AG04450 (cell line): ENCODE measurements at regions of chr1 and their contacts with region 1.

Region 1: GRCh38 chr1:151106894-151107293 is 36.3 kb downstream of the GABPB2 start:
- DNase-seq: no peak
- H3K4me3 ChIP-seq: no peak overlapping the region
- H3K27ac ChIP-seq: no peak overlapping the region
- H3K27me3 ChIP-seq: no peaks in the 10 kb centered on the region
- CTCF ChIP-seq: no peak

Region 2: GRCh38 chr1:150955280-150955679 is 151.6 kb before region 1 on chr1:
- CTCF ChIA-PET with region 1: no interaction called
- POLR2A ChIA-PET with region 1: no interaction called
- DNase-seq: no peak
- H3K4me3 ChIP-seq: no peak overlapping the region
- H3K27ac ChIP-seq: no peak overlapping the region
- H3K27me3 ChIP-seq: no peaks in the 10 kb centered on the region
- CTCF ChIP-seq: no peak

Region 3: GRCh38 chr1:151085953-151086559 is 20.8 kb before region 1 on chr1:
- CTCF ChIA-PET with region 1: interaction called, 105 read pairs
- POLR2A ChIA-PET with region 1: no interaction called
- DNase-seq: no peak
- H3K4me3 ChIP-seq: no peak overlapping the region
- H3K27ac ChIP-seq: no peak overlapping the region
- H3K27me3 ChIP-seq: no peaks in the 10 kb centered on the region
- CTCF ChIP-seq: no peak

Region 4: DNA sequence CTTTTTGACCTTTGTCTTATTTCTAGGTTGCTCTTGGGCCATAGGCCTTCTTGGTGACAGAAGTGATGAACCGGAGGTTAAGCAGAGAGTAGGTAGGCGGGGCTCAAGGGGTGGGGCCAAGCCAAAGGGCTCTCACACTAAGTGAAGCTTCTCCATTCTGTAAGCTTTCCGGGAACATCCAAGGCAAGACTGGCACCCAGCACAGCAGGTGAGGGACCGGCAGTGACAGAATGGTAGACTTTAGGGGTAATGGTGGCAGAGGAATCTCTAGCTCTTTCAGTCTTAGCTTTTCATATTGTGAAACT is 49.6 kb after region 1 on chr1 and contains the start of gene TNFAIP8L2:
- CTCF ChIA-PET with region 1: interaction called, 162 read pairs
- POLR2A ChIA-PET with region 1: interaction called, 10 read pairs
- DNase-seq: no peak
- H3K4me3 ChIP-seq: no peak within 1 kb of the TSS
- H3K27ac ChIP-seq: no peak within 1 kb of the TSS
- H3K27me3 ChIP-seq: no peaks in the 10 kb centered on the region
- CTCF ChIP-seq: no peak
- polyA plus RNA-seq, gene TNFAIP8L2: not detected in 2 replicates